Activated CD4-positive, alpha-beta T cell treated with anti-CD3 and anti-CD28 coated beads, Interleukin-2, amount 10 ng/mL, durations not matched to agents 24 days and 14 days (primary cell): ENCODE measurements at regions of chr3 and their contacts with region 1.

Region 1: GRCh38 chr3:143644370-143645089 is 203.7 kb downstream of the SLC9A9 start:
- DNase-seq: peak; percentile 65
- H3K4me3 Mint-ChIP-seq: no peak overlapping the region
- H3K27ac Mint-ChIP-seq: no peak overlapping the region
- H3K4me1 Mint-ChIP-seq: no peaks in the 10 kb centered on the region
- H3K27me3 Mint-ChIP-seq: no peaks in the 10 kb centered on the region

Region 2: GRCh38 chr3:143433787-143434378 is 210.6 kb before region 1 on chr3:
- intact Hi-C with region 1: loop called (anchors 10 kb)
- DNase-seq: peak; percentile 73
- H3K4me3 Mint-ChIP-seq: no peak overlapping the region
- H3K27ac Mint-ChIP-seq: no peak overlapping the region
- H3K4me1 Mint-ChIP-seq: no peaks in the 10 kb centered on the region
- H3K27me3 Mint-ChIP-seq: no peaks in the 10 kb centered on the region

Region 3: GRCh38 chr3:143685491-143685890 is 41.0 kb after region 1 on chr3:
- intact Hi-C with region 1: no loop called
- DNase-seq: no peak
- H3K4me3 Mint-ChIP-seq: no peak overlapping the region
- H3K27ac Mint-ChIP-seq: no peak overlapping the region
- H3K4me1 Mint-ChIP-seq: no peaks in the 10 kb centered on the region
- H3K27me3 Mint-ChIP-seq: peaks cover 1% of the 10 kb centered on the region